ENCODE measurements at regions of chr4 and their contacts with region 1.

Region 1: GRCh38 chr4:76305971-76306881 is at the start of gene STBD1:
- DNase-seq: peak; percentile 85 to 88
- H3K4me3 ChIP-seq: peak within 1 kb of the TSS; percentile 51
- H3K4me3 Mint-ChIP-seq: peak within 1 kb of the TSS; percentile 90
- H3K27ac Mint-ChIP-seq: peak within 1 kb of the TSS; percentile 71
- H3K4me1 ChIP-seq: peaks cover 22% of the 10 kb centered on the region
- H3K4me1 Mint-ChIP-seq: peaks cover 26% of the 10 kb centered on the region
- H3K27me3 ChIP-seq: no peaks in the 10 kb centered on the region
- H3K27me3 Mint-ChIP-seq: no peaks in the 10 kb centered on the region
- CTCF ChIP-seq: no peak
- total RNA-seq, gene STBD1: 3.8 and 4.2 TPM in 2 replicates

Region 2: DNA sequence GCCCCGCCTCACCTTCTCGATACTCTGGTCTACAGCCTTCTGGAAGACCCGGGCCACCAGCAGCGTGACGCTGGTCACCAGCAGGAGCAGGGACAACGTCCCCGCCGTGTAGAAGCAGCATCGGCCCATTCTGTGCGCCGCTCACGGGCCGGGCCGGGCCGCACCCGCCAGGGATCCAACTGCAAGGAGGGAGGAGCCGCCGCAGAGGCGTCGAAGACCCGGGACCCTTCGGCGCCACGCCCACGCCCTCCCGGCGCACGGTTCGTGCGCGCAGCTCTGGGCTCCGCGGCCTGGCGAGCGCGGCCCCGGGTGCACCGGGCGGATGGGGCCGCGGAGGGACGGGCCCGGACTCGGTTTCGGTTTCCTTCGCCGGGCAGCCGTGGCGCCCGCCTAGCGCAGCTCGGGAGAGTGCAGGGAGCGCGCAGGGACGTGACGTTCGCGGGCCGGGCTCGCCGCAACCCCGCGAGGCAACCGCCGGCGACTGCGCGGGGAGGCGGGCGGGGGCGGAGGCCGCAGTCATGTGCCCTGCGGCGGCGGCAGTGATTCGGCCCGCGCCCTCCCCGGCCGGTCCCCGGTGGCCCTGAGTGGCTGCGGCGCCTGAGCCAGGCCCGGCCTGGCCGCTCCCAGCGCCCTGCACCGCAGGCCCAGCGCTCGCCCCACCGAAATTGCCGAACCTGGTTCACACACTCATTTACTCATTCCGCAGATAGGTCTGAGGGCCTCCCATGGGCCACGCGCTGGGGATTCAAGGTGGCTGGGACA is 92.6 kb before region 1 on chr4 and contains the start of gene SCARB2:
- CTCF ChIA-PET with region 1: no interaction called
- POLR2A ChIA-PET with region 1: no interaction called
- intact Hi-C with region 1: loop called (anchors 10 kb)
- DNase-seq: peak; percentile 81 to 91
- H3K4me3 ChIP-seq: peak within 1 kb of the TSS; percentile 84
- H3K4me3 Mint-ChIP-seq: peak within 1 kb of the TSS; percentile 84
- H3K27ac Mint-ChIP-seq: peak within 1 kb of the TSS; percentile 83
- H3K4me1 ChIP-seq: peaks cover 52% of the 10 kb centered on the region
- H3K4me1 Mint-ChIP-seq: peaks cover 56% of the 10 kb centered on the region
- H3K27me3 ChIP-seq: no peaks in the 10 kb centered on the region
- H3K27me3 Mint-ChIP-seq: no peaks in the 10 kb centered on the region
- CTCF ChIP-seq: peak in 1 of 2 experiments; percentile 13
- total RNA-seq, gene SCARB2: 148 and 150 TPM in 2 replicates

Region 3: GRCh38 chr4:76377911-76378310 is 71.7 kb after region 1 on chr4:
- CTCF ChIA-PET with region 1: interaction called, 29 read pairs
- POLR2A ChIA-PET with region 1: interaction called, 3 read pairs
- intact Hi-C with region 1: loop called (anchors 1 kb)
- DNase-seq: peak; percentile 60 to 70
- H3K4me3 ChIP-seq: no peak overlapping the region
- H3K4me3 Mint-ChIP-seq: no peak overlapping the region
- H3K27ac Mint-ChIP-seq: no peak overlapping the region
- H3K4me1 ChIP-seq: peaks cover 18% of the 10 kb centered on the region
- H3K4me1 Mint-ChIP-seq: peaks cover 10% of the 10 kb centered on the region
- H3K27me3 ChIP-seq: no peaks in the 10 kb centered on the region
- H3K27me3 Mint-ChIP-seq: no peaks in the 10 kb centered on the region
- CTCF ChIP-seq: peak; percentile 63 to 71

Region 4: DNA sequence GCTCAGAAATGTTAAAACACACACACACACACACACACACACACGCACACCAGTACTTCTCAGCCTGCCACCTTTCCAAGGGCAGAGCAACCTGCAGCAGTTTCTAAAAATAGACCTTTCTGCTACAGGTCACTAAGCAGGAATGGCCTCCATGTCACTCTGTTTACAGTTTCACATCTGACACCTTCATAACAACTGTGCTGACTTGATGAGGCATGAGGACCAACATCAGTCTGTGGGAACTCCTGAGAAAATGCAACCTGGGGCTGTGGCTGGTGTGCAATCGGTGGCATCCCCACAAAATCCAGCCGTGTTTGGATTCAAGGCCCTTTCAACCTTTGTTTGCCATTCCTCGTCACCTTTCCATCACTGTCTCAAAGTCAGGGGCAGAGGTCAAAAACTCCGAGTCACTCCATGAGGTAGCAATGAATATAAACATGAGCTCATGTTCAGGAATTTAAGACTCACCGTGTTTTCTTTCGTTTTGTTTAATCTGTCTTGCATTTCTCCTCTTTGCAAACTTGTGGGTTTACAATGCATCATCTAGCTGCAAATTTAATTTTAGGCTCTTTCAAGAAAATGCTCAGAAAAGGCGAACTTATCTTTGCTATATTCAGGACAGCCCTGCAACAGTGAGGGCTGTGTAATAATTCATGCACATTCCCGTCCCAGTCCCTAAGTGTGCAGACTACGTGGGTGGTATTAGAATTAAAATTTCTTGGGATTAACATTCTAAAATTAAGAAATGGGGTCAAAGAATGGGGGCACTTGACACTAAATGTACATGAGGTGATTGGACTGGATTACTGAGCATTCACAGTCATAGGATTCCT is 264.1 kb after region 1 on chr4:
- CTCF ChIA-PET with region 1: no interaction called
- POLR2A ChIA-PET with region 1: no interaction called
- intact Hi-C with region 1: no loop called
- DNase-seq: peak; percentile 73 to 76
- H3K4me3 ChIP-seq: no peak overlapping the region
- H3K4me3 Mint-ChIP-seq: peak overlapping the region; percentile 44
- H3K27ac Mint-ChIP-seq: peak overlapping the region; percentile 81
- H3K4me1 ChIP-seq: peaks cover 23% of the 10 kb centered on the region
- H3K4me1 Mint-ChIP-seq: peaks cover 44% of the 10 kb centered on the region
- H3K27me3 ChIP-seq: no peaks in the 10 kb centered on the region
- H3K27me3 Mint-ChIP-seq: no peaks in the 10 kb centered on the region
- CTCF ChIP-seq: no peak

Measured in Caco-2 (cell line).